Mammary epithelial cell (primary cell): ENCODE measurements at regions of chr1 and their contacts with region 1.

Region 1: GRCh38 chr1:61724813-61725694 is at the start of gene TM2D1:
- DNase-seq: peak; percentile 86
- H3K4me3 ChIP-seq: peak within 1 kb of the TSS; percentile 76 to 99 (median 97)
- H3K27ac ChIP-seq: peak within 1 kb of the TSS; percentile 96
- H3K4me1 ChIP-seq: peaks cover 11% of the 10 kb centered on the region
- H3K27me3 ChIP-seq: no peaks in the 10 kb centered on the region
- CTCF ChIP-seq: no peak
- total RNA-seq, gene TM2D1: 38.3 to 42.0 TPM

Region 2: DNA sequence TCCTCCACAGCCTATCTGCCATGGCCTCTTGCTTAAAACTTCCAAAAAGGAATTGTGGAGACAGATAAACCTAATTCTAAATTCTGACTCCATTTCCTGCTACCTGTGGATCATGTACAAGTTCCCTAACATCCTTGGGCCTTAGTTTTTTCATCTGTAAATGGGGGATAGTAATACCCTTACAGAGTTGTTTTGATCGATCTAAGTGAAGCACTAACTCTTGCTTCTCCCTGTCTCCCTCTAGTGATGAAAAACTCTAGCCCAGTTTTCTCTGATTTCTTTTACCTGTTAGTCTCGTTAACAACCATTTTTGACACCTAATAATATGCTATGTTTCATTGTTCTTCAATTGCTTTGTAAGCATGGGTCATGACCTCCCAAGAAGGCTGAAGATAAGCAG is 66.0 kb before region 1 on chr1:
- CTCF ChIA-PET with region 1: no interaction called
- dilution Hi-C with region 1: no loop called
- in situ Hi-C with region 1: no loop called
- intact Hi-C with region 1: no loop called
- DNase-seq: no peak
- H3K4me3 ChIP-seq: no peak overlapping the region
- H3K27ac ChIP-seq: no peak overlapping the region
- H3K4me1 ChIP-seq: no peaks in the 10 kb centered on the region
- H3K27me3 ChIP-seq: no peaks in the 10 kb centered on the region
- CTCF ChIP-seq: peak; percentile 28 to 55

Region 3: DNA sequence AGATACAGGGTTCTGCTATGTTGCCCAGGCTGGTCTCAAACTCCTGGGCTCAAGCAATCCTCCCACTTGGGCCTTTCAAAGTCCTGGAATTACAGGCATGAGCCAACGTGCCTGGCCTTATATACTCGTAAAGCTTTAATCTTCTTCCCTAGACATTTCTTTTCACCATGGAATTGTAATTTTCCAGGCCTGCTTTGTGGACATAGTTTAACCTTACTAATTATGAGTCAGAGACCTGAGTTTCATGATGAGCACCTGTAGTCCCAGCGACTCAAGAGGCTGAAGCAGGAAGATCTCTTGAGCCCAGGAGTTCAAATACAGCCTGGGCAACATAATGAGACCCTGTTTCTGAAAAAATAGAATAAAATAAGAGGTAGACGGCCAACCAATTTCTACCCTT is 29.5 kb after region 1 on chr1:
- CTCF ChIA-PET with region 1: no interaction called
- dilution Hi-C with region 1: no loop called
- in situ Hi-C with region 1: no loop called
- intact Hi-C with region 1: loop called (anchors 2 kb)
- DNase-seq: peak; percentile 93
- H3K4me3 ChIP-seq: no peak overlapping the region
- H3K27ac ChIP-seq: peak overlapping the region; percentile 72
- H3K4me1 ChIP-seq: peaks cover 12% of the 10 kb centered on the region
- H3K27me3 ChIP-seq: no peaks in the 10 kb centered on the region
- CTCF ChIP-seq: no peak